ENCODE measurements at regions of chr22 and their contacts with region 1.

Region 1: GRCh38 chr22:40764763-40765441 is 54.2 kb downstream of the SLC25A17 start:
- DNase-seq: no peak
- ATAC-seq: no peak

Region 2: GRCh38 chr22:40436505-40437451 is 328.1 kb before region 1 on chr22:
- intact Hi-C with region 1: loop called (anchors 10 kb)
- DNase-seq: peak; percentile 52
- ATAC-seq: peak; percentile 81

Region 3: GRCh38 chr22:40588726-40589125 is 176.2 kb before region 1 on chr22:
- intact Hi-C with region 1: no loop called
- DNase-seq: no peak
- ATAC-seq: no peak

Region 4: DNA sequence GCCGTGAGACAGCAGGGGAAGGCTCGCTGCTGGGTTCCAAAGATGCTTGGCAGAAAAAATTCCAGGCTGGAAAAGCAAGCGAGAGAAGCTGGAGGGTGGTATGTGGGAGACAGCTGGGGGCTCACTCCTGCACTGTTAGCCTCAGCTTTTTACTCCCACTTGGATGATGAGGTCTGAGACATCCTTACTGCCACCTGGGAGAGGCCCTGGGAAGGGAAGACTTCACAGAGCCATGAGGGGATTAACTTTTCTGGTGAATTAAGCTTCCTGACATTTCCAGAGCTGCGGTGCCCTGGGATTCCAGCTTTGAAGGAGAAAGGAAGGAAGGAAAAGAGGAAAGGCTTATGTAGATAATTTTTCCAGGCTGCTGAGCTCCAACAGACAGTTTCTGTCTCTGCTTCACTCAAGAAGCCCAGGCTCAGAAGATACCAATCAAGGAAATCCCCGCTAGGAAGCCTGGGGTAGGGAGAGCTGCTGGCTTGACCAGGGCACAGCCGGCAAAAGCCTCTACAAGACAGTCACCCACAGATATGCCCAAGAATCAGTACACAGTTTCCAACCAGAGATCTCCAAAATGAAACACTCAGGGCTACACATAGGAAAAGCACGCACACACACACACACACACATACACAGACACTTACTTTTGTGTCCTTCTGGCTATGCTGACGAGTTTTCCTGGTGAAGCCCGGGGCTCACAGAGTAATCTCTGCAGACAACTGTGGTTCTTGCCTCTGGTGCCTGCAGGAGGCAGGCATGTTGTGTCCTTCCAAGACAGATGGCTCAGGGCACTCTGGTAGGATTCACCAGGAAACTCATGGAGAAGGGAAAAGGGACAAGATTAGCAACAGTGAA is 84.7 kb before region 1 on chr22:
- intact Hi-C with region 1: loop called (anchors 10 kb)
- DNase-seq: no peak
- ATAC-seq: no peak

Region 5: DNA sequence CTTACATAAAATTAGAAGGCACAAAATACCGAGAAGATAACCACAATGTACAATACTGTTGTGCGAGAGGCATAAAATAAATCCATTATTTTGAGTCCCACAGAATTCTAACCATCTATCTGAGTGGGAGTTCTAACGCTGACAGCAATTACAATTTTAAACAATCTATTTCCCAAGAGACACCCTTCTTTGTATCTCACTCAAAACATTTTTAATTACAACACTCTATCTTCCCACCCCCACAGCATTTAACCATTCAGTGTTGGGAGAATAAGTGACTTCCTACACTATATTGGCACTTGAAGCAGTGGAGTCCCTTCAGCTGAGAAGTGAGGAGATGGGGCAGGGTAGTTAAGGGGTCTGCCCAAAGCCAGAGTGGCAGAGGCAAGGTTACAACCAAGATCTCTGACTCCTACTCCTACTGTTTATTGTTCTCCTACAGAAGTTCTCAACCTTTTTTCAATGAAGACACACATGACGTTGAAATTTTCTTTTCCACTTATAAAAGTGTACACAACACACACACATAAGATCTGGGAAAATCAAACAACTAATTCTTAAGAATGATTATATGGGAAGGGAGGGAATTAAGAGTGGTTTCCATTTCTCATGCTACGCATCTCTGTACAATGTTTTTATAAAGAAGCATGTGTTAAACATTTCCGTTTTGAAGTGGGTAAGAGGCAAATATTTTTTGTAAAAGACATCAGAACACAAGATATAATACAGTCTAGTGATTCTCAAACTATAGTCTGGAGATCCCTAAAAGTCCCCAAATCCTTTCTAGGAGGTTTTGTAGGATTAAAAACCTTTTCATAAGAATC is 43.3 kb after region 1 on chr22:
- intact Hi-C with region 1: no loop called
- DNase-seq: no peak
- ATAC-seq: no peak